Stomach (tissue), 19 donors: ENCODE measurements at regions of chr10 and their contacts with region 1.

Region 1: DNA sequence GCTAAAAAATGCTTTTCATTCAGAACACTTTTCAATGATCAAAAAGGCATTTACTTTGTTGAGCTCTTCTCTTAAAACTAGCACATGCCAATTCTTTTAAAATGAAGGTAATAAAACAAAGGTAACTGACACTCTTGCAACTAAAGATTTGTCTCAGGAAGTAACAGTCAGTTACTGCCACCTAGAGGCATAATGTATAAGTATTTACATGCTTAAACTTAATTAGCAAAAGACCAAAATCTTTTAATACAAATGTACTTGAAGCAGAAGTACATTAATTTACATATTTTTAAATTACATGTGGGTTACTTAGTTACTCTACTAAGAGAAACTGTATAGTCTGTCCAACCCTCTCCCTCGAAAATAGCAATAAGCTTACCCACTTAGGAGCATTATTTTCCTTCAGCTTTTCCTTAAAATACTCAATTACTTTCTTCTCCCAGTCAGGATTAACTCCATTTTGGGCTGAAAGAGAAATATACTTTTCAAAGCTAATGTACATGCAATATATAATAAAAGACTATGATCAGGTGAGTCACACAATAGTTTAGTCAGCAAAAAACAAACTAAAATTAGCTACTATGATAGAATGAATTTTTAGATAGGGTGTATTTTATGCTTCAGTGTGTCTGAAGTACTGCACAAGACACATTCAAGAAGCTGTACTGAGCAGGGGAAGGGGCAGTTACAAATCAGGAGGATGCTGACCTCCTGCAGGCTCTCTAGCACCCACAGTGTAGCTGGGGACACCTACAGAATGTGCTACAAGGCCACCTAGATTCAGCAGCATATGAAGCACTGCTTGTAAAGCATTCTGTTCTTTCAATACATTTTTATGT is 13.0 kb downstream of the MCMBP start:
- DNase-seq: peak in 1 of 2 donors; percentile 70
- H3K4me3 ChIP-seq: no peak overlapping the region
- H3K27ac ChIP-seq: no peak overlapping the region
- H3K4me1 ChIP-seq: peaks cover 0 to 40% (median 19%) of the 10 kb centered on the region in 4 donors
- H3K27me3 ChIP-seq: no peaks in the 10 kb centered on the region
- CTCF ChIP-seq: peak in 5 of 7 experiments; percentile 24 to 58 (median 38)
- EP300 ChIP-seq: no peak
- POLR2A ChIP-seq: no peak

Region 2: GRCh38 chr10:119608316-119609155 is 251.1 kb before region 1 on chr10:
- intact Hi-C with region 1: loop called (anchors 10 kb)
- DNase-seq: peak; percentile 55 to 66
- H3K4me3 ChIP-seq: no peak overlapping the region
- H3K27ac ChIP-seq: no peak overlapping the region
- H3K4me1 ChIP-seq: peaks cover 0 to 8% (median 6%) of the 10 kb centered on the region in 4 donors
- H3K27me3 ChIP-seq: no peaks in the 10 kb centered on the region
- CTCF ChIP-seq: peak in 5 of 7 experiments; percentile 29 to 55 (median 44)
- EP300 ChIP-seq: no peak
- POLR2A ChIP-seq: no peak

Region 3: GRCh38 chr10:119742947-119743648 is 116.5 kb before region 1 on chr10:
- intact Hi-C with region 1: loop called (anchors 10 kb)
- DNase-seq: peak in 1 of 2 donors; percentile 41
- H3K4me3 ChIP-seq: no peak overlapping the region
- H3K27ac ChIP-seq: no peak overlapping the region
- H3K4me1 ChIP-seq: peaks cover 8 to 25% (median 17%) of the 10 kb centered on the region in 4 donors
- H3K27me3 ChIP-seq: no peaks in the 10 kb centered on the region
- CTCF ChIP-seq: no peak
- EP300 ChIP-seq: no peak
- POLR2A ChIP-seq: no peak

Region 4: GRCh38 chr10:120041807-120042559 is 182.3 kb after region 1 on chr10:
- intact Hi-C with region 1: no loop called
- DNase-seq: no peak
- H3K4me3 ChIP-seq: no peak overlapping the region
- H3K27ac ChIP-seq: no peak overlapping the region
- H3K4me1 ChIP-seq: no peaks in the 10 kb centered on the region
- H3K27me3 ChIP-seq: no peaks in the 10 kb centered on the region
- CTCF ChIP-seq: no peak
- EP300 ChIP-seq: no peak
- POLR2A ChIP-seq: no peak